ENCODE measurements at regions of chr5 and their contacts with region 1.

Region 1: GRCh38 chr5:54310433-54311175 is at the start of gene ARL15:
- DNase-seq: peak; percentile 100
- ATAC-seq: peak; percentile 96
- total RNA-seq, gene ARL15: 23.7 TPM

Region 2: GRCh38 chr5:54254482-54255198 is 56.0 kb before region 1 on chr5:
- intact Hi-C with region 1: loop called (anchors 1 kb)
- DNase-seq: no peak
- ATAC-seq: peak; percentile 85

Region 3: DNA sequence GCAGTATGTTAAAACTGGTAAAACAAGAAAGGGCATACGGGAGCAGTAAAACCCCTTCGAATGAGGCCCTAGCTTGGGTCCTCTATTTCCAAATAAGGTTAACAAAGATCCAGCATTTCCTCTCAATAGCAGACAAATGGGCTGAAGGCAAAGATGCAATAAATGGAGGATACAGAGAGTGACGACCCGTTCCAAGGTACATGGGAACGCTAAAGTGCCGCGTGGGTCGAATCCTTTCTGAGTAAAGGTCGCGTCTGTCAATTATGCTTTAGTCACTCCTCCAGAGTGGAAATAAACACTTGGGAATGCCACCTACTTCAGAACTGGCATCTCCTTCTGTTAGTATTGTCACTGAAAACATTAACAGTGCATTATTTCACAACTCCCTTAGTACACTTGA is 24.9 kb before region 1 on chr5:
- intact Hi-C with region 1: no loop called
- DNase-seq: no peak
- ATAC-seq: no peak

Region 4: DNA sequence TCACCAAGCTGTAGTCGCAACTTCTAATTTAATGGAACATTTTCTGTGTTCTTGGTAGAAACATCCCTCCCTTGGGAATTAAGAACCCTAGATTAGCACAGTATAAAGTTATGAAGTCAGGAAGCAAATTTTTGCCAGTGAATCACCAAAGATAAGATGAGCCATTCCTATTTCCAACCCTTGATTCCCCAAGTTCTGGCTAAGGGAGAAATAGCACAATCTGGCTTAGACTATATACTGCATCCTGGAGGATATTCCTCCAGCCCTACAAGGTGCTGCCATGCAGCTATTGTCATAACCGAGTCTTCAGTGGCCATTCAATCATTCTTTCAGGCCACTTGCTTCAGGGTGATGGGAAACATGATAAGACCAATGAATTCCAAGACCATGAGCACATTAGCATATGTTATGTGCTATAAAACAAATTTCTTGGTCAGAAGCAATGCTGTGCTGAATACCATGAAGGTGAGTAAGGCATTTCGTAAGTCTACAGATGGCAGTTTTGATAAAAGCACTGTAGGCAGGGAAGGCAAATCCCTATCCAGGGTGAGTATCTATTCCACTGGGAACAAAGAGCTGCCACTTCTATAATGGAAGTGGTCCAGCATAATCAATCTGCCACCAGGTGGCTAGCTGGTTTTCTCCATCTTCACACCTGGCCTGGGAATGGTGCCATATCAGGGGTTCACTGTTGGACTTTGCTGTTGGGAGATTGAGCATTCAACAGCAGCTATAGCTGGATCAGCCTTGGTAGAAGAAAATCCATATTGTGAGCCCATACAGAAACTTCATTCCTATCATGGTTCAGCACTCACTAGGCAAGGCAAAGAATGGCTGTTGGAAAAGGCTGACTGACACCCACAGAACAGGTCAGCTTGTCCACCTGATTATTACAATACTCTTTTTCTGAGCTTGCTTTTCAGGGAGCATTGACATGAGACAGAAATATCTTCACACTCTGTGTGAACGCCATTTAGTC is 19.4 kb after region 1 on chr5:
- intact Hi-C with region 1: no loop called
- DNase-seq: no peak
- ATAC-seq: peak; percentile 67

Region 5: GRCh38 chr5:54415896-54416601 is 105.4 kb after region 1 on chr5:
- intact Hi-C with region 1: loop called (anchors 5 kb)
- DNase-seq: no peak
- ATAC-seq: no peak

Region 6: DNA sequence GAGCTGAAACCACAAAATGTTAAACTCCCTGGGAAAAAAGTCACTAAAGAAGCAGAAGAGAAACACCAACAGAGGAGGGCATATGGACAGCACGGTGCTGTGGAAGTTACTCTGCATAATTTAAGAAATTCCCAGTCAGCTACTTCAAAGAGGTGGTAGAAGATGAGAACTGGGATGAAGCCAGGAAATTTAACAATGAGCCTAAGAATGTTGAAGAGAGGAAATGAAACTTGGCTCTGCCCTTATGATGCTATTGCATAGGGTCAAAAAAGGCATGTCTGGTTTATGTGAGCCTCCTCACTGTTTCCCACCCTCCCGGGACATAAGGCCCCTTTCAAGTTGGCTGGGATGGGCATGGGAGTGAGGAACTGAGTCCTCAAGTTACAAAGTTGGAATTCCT is 181.6 kb after region 1 on chr5:
- intact Hi-C with region 1: loop called (anchors 5 kb)
- DNase-seq: no peak
- ATAC-seq: peak; percentile 18